ENCODE measurements at regions of chr11 and their contacts with region 1.

Region 1: DNA sequence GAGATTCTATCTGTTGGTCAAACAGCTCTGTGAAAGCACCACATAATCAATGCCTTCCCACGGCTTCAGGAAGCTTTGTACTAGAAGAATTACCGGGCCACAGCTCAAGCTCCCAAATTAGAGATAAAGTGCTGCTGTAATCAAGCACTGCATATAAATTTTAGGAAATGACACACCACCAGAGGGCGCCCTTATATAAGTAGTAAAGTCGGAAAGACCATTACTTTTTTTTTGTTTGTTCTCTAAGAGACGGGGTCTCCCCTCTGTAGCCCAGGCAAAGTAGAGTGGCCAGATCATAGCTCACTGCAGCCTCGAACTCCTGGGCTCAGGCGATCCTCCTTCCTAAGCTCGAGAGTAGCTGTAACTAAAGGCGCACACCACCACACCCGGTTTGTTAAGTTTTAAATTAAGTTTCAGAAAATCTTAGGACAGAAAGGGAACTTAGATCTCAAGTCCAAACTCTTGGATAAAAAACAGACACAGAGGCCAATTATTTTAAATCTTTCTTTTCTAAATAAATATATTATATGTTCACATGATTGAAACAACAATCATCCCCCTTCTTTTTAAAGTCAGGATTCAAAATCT is 32.6 kb downstream of the PRCP start:
- DNase-seq: peak; percentile 92
- H3K4me3 ChIP-seq: no peak overlapping the region
- H3K27ac ChIP-seq: no peak overlapping the region
- H3K4me1 ChIP-seq: peaks cover 9% of the 10 kb centered on the region
- H3K27me3 ChIP-seq: no peaks in the 10 kb centered on the region
- CTCF ChIP-seq: peak; percentile 86

Region 2: DNA sequence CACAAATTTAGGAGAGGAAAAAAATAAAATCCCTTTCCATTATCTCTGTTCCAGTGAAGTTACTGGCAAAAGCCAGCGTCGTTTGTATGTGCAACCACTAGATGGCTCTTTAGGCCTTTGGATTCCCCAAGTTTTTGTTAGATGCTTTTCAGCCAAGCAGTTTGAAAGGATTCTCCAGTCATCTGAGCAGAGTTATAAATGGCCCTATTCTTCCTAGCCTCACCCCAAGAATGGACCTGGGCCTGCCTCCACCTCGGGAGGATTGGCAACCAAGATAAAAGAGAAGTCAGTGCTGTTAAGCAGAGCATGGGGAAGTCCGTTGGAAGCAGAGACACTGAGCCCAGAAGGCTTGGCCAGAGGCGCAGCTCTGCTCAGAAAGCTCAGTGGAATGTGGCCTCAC is 149.3 kb before region 1 on chr11:
- CTCF ChIA-PET with region 1: interaction called, 5 read pairs
- POLR2A ChIA-PET with region 1: no interaction called
- intact Hi-C with region 1: loop called (anchors 1 kb)
- DNase-seq: peak; percentile 69
- H3K4me3 ChIP-seq: no peak overlapping the region
- H3K27ac ChIP-seq: no peak overlapping the region
- H3K4me1 ChIP-seq: no peaks in the 10 kb centered on the region
- H3K27me3 ChIP-seq: peaks cover 1% of the 10 kb centered on the region
- CTCF ChIP-seq: peak; percentile 87

Region 3: GRCh38 chr11:82775736-82776346 is 91.7 kb before region 1 on chr11:
- CTCF ChIA-PET with region 1: interaction called, 6 read pairs
- POLR2A ChIA-PET with region 1: no interaction called
- intact Hi-C with region 1: loop called (anchors 1 kb)
- DNase-seq: peak; percentile 89
- H3K4me3 ChIP-seq: no peak overlapping the region
- H3K27ac ChIP-seq: no peak overlapping the region
- H3K4me1 ChIP-seq: peaks cover 4% of the 10 kb centered on the region
- H3K27me3 ChIP-seq: no peaks in the 10 kb centered on the region
- CTCF ChIP-seq: peak; percentile 98

Region 4: DNA sequence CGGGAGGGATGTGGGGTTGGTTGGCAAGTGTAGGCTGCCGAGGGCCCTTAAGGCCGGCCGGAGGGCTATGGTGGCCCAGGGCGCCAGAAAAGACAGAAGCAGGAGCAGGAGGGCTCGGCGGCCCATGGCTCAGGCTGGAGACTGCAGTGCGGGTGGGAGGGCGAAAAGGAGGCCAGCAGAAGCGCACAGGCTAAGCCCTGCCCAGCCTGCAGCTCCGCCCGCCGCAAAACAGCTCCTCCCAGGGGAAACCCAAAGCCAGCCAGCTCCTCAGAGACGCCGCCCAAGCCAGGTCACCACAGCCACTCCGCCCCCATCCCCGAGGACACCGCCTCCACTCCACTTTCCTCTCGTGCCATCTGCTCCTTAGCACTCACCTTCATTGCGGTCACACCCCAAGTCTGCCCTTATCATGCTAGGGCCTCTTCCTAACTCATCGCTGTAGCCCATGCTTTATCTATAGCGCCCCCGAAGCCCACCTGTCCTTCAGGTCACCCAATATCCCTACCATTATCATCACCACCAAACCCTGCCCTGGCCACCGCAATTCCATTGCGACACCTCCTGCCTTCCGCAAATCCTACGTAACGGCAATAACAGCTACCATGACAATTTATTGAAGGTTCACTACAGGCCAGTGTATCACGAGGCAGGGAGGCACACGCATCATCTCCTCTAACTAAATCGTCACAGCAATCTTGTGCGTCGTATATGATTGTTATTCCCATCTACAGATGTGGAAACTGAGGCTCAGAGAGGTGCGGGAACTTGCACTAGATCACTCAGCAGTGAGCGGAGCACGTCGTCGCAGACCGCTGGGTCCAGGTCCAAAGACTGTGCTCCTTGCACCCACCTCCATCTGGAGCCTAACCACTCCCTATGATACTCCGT is 32.9 kb after region 1 on chr11 and contains the start of gene PRCP:
- CTCF ChIA-PET with region 1: interaction called, 9 read pairs
- POLR2A ChIA-PET with region 1: no interaction called
- intact Hi-C with region 1: loop called (anchors 1 kb)
- DNase-seq: peak; percentile 89
- H3K4me3 ChIP-seq: peak within 1 kb of the TSS; percentile 65
- H3K27ac ChIP-seq: peak within 1 kb of the TSS; percentile 64
- H3K4me1 ChIP-seq: peaks cover 22% of the 10 kb centered on the region
- H3K27me3 ChIP-seq: no peaks in the 10 kb centered on the region
- CTCF ChIP-seq: 0 out of 2 replicates have a peak, but pooled peaks have one; percentile 18
- total RNA-seq, gene PRCP: 25.1 and 28.8 TPM in 2 replicates

Region 5: DNA sequence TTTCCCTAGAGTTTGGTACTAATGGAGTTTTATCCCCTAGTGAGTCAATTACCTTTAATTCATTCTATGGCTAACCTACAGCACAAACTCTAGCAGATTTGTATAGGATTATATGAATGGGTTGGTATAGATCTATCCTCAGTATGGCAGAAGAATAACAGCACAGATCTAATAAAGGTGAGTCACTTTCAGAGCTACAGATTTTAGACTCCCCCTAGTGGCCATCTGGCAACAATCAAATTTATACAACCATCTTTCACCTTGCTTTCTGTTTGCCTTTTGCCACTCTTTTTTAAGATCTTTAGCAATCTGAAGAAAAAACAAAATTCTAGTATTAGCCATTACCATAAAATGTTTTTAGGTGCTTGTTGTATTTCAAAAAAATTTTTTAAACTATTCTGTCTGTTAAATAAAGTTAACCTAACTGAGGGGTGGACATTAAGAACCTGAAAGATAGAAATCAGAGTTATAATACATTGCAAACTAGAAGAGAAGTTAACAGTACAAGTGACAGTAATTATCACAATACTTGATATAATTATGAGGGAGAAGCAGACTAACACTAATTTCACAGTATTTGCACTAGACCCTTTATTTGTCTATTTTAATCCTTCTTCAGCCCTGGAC is 59.8 kb after region 1 on chr11:
- CTCF ChIA-PET with region 1: interaction called, 5 read pairs
- POLR2A ChIA-PET with region 1: no interaction called
- intact Hi-C with region 1: loop called (anchors 5 kb)
- DNase-seq: peak; percentile 74
- H3K4me3 ChIP-seq: no peak overlapping the region
- H3K27ac ChIP-seq: no peak overlapping the region
- H3K4me1 ChIP-seq: no peaks in the 10 kb centered on the region
- H3K27me3 ChIP-seq: no peaks in the 10 kb centered on the region
- CTCF ChIP-seq: peak; percentile 93

Region 6: GRCh38 chr11:83235825-83236224 is 368.2 kb after region 1 on chr11:
- CTCF ChIA-PET with region 1: no interaction called
- POLR2A ChIA-PET with region 1: no interaction called
- intact Hi-C with region 1: no loop called
- DNase-seq: no peak
- H3K4me3 ChIP-seq: no peak overlapping the region
- H3K27ac ChIP-seq: no peak overlapping the region
- H3K4me1 ChIP-seq: peaks cover 10% of the 10 kb centered on the region
- H3K27me3 ChIP-seq: no peaks in the 10 kb centered on the region
- CTCF ChIP-seq: no peak

Region 7: DNA sequence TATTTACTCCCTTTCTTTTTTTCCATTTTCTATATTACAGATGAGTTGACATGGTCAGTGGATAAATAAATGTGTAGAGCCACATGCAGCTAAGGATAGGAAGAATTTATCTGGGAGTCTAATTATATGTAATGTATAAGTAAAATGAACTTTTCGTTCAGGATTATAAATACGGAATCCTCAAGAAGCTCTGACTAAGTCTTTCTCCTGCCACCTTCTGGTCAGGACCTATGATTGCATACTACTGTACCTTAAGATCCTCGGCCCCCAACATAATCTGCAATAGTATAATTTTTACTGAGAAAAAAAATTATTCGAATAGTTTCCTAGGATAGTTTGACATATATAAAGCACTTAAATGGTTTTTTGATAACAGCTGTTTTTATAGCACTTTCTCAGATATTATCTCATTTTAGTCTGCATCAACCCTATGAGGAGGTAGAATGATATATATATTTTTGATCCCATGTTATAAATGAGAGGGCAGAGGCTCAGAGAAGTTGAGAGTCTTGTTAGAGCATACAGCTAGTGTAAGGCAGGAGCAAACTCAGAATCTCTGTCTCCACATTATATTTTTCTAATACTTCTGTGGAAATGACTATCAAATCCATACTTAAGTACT is 382.5 kb after region 1 on chr11:
- CTCF ChIA-PET with region 1: no interaction called
- POLR2A ChIA-PET with region 1: no interaction called
- intact Hi-C with region 1: loop called (anchors 5 kb)
- DNase-seq: peak; percentile 68
- H3K4me3 ChIP-seq: no peak overlapping the region
- H3K27ac ChIP-seq: no peak overlapping the region
- H3K4me1 ChIP-seq: no peaks in the 10 kb centered on the region
- H3K27me3 ChIP-seq: no peaks in the 10 kb centered on the region
- CTCF ChIP-seq: peak; percentile 81

Measured in A673 (cell line).